PC-9 (cell line): ENCODE measurements at regions of chr4 and their contacts with region 1.

Region 1: DNA sequence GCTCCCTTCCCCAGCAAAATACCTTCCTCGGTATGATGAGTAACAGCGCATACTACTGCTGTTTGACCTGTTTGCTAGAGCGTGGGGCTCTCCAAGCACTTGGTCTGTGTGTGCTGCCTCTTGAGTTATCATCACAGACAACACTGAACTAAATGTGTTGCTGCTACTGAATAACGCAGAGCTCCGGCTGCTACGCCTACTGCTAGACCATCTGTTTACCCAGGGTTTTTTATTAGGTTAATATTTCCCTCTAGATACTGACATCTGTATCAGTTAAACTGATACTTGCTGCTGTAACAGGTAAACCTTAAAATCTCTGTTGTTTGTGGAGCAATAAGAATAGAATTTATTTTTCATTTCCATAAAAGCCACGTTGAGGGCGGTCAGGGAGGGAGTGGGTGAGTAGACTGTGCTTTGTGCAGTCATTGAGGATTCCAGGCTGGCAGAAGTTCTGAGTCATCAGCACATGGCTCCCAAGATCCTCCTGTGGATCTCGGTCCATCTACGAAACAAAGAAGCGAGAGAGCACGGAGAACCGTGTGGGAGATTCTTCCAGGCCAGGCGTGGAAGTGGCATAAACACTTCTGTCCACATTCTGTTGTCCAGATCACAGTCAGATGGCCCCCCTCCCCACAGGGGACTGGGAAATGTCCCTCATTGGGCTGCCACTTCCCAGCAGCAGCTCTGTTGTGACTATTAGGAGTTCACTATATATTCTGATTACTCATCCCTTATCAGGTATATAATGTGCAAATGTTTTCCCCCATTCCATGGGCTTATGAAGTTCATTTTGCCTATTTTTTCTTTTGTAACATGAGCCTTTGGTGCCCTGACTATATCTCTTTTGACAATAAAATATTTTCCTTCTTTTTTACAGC is 14.1 kb downstream of the GRK4 start:
- DNase-seq: no peak
- H3K4me3 ChIP-seq: no peak overlapping the region
- H3K27ac ChIP-seq: no peak overlapping the region
- H3K4me1 ChIP-seq: no peaks in the 10 kb centered on the region
- H3K27me3 ChIP-seq: no peaks in the 10 kb centered on the region
- CTCF ChIP-seq: no peak

Region 2: GRCh38 chr4:2963175-2963965 is 14.1 kb before region 1 on chr4 and contains the starts of genes GRK4 and NOP14:
- CTCF ChIA-PET with region 1: interaction called, 5 read pairs
- POLR2A ChIA-PET with region 1: interaction called, 21 read pairs
- intact Hi-C with region 1: no loop called
- DNase-seq: peak; percentile 91 to 96
- H3K4me3 ChIP-seq: peak within 1 kb of the TSS; percentile 94
- H3K27ac ChIP-seq: peak within 1 kb of the TSS; percentile 61
- H3K4me1 ChIP-seq: peaks cover 14% of the 10 kb centered on the region
- H3K27me3 ChIP-seq: no peaks in the 10 kb centered on the region
- CTCF ChIP-seq: no peak; the same call in 1 of the 2 replicates
- total RNA-seq, gene GRK4: 3.1 and 4.4 TPM in 2 replicates
- total RNA-seq, gene NOP14: 30.9 and 33.6 TPM in 2 replicates

Region 3: GRCh38 chr4:3021627-3022026 is 44.2 kb after region 1 on chr4:
- CTCF ChIA-PET with region 1: interaction called, 19 read pairs
- POLR2A ChIA-PET with region 1: no interaction called
- intact Hi-C with region 1: no loop called
- DNase-seq: no peak
- H3K4me3 ChIP-seq: no peak overlapping the region
- H3K27ac ChIP-seq: no peak overlapping the region
- H3K4me1 ChIP-seq: no peaks in the 10 kb centered on the region
- H3K27me3 ChIP-seq: no peaks in the 10 kb centered on the region
- CTCF ChIP-seq: no peak